BJ (cell line): ENCODE measurements at regions of chr16 and their contacts with region 1.

Region 1: DNA sequence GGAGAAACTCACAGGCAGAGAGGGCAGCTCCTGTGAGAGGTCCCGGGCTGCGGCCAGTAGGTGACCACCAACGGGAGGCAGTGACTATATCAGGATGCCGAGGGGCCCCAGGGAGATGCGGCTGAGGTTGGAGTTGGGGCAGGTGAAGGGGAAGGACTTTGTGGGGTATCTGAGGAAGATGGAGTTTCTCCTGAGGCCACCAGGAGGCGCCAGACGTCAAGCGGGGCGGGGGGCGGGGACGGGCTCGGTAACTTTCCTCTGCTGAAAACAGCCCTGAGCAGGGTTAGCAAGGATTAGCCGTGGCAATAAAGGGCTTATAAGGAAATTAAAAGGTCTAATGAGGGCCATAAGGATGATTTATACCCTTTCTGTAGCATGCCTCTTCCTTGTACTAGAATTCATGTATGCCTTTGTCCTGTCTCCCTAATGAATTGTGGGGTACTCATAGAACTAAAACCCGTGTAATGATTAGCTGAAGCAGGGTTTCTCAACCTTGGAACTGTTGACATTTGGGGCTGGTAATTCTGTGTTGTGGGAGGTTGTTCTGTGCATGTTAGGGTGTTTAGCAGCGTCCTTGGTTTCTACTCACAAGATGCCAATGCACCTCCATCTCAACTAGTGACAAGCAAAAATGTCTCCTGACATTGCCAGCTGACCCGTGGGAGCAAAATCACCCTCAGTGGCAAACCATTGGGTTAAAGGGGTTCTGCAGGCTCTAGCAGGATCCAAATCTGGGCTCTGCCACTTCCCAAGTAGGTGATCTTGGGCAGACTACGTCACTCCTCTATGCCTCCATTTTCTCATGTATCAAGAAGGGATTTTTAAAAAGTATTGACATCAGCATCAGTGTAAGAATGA is 74.8 kb upstream of the GRIN2A start:
- DNase-seq: no peak
- H3K4me3 ChIP-seq: no peak overlapping the region
- H3K27me3 ChIP-seq: no peaks in the 10 kb centered on the region
- CTCF ChIP-seq: peak; percentile 94

Region 2: DNA sequence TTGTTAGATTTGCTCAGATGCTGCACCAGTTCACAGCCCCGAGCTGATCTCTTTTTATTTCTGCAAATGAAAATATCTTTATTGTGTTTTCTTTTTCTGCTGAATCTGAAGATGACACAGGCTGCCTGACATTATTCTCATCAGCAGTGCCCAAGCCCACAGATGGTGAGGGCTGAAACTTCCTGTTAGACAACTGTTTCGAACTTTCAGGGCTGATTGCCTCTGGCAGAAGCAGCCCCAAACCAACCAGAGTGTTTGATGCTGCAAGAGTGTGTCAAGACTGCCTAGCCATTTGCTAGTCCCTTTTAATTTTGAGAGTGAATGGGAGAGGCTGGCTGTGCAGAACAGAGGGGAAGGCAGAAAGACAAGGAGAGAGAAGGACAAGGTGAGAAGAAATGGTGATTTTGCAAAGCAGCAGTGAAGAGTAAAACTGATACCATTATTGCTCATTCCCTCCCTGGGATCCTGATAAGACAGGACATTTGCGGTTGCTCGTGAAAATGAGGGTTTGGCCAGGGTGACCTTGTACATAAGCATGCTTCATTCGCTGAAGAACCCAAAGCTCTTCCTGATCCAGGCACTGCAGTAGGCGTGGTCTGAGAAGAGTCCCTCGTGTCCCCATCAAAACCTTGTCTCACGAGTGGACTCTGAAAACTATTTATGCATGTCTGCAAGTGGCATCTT is 1743.9 kb before region 1 on chr16:
- CTCF ChIA-PET with region 1: no interaction called
- POLR2A ChIA-PET with region 1: no interaction called
- DNase-seq: no peak
- H3K4me3 ChIP-seq: no peak overlapping the region
- H3K27me3 ChIP-seq: no peaks in the 10 kb centered on the region
- CTCF ChIP-seq: no peak

Region 3: DNA sequence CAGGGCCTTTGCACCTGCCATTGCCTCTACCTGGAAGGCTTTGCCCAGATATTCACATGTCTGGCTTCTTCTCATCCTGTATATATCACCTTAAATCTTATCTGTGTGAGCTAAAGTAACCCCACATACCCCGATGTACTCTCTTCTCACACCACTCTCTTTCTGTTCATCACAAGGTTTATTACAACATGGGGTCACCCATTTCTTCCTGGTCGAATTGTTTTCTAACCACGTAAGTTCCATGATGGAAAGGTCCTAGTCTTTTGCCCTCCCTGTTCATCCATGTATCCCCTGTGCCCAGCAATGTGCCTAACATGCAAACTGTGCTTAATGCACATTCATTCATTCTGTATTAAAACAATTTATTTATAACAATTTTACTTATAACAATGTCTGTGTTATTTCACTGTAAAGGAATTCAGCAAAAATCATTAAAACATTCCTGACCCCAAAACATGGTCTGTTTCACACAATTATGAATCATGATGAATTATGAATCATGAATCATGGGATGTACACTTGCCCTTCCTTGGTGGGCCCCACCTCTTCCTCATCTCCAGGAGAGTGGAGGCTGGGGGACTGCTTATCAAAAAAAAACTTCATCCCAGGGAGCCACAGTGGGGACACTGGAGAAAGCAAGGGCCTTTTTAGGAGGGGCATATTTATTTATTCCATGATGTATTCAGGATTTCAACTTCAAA is 411.2 kb before region 1 on chr16:
- CTCF ChIA-PET with region 1: no interaction called
- POLR2A ChIA-PET with region 1: no interaction called
- DNase-seq: no peak
- H3K4me3 ChIP-seq: no peak overlapping the region
- H3K27me3 ChIP-seq: no peaks in the 10 kb centered on the region
- CTCF ChIP-seq: no peak

Region 4: GRCh38 chr16:10504404-10504885 is 247.4 kb after region 1 on chr16:
- CTCF ChIA-PET with region 1: interaction called, 34 read pairs
- POLR2A ChIA-PET with region 1: no interaction called
- DNase-seq: no peak
- H3K4me3 ChIP-seq: no peak overlapping the region
- H3K27me3 ChIP-seq: no peaks in the 10 kb centered on the region
- CTCF ChIP-seq: no peak

Region 5: GRCh38 chr16:10737068-10737625 is 480.1 kb after region 1 on chr16:
- CTCF ChIA-PET with region 1: interaction called, 24 read pairs
- POLR2A ChIA-PET with region 1: no interaction called
- DNase-seq: no peak
- H3K4me3 ChIP-seq: no peak overlapping the region
- H3K27me3 ChIP-seq: no peaks in the 10 kb centered on the region
- CTCF ChIP-seq: peak; percentile 85